ENCODE measurements at regions of chr7 and their contacts with region 1.

Region 1: DNA sequence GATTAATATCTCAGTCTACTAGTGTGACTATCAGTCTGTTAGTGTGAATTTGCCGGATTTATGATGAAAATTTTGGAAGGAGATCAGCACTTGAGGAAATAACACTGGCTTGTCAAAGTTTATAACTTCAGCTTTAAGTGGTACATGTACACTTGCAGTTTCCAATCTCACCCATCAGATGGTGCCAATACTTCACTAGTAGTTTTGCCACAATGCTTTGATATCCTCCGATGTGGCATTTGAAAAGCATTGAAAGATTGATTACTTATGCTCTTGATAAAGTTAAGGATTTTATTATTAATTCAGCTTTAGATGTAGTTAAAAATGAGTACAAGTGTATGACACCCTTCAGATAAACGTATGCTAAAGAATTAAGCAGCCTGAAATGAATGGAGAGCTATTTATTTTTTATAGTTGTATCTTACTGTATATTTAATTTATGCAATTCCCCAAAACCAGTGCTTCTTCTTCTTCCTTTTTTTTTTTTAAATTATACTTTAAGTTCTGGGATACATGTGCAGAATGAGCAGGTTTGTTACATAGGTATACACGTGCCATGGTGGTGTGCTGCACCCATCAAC is 98.2 kb downstream of the ANLN start:
- H3K4me3 ChIP-seq: no peak overlapping the region
- H3K27ac ChIP-seq: no peak overlapping the region
- H3K4me1 ChIP-seq: no peaks in the 10 kb centered on the region
- CTCF ChIP-seq: peak; percentile 32; the same call in 1 of the 2 replicates

Region 2: DNA sequence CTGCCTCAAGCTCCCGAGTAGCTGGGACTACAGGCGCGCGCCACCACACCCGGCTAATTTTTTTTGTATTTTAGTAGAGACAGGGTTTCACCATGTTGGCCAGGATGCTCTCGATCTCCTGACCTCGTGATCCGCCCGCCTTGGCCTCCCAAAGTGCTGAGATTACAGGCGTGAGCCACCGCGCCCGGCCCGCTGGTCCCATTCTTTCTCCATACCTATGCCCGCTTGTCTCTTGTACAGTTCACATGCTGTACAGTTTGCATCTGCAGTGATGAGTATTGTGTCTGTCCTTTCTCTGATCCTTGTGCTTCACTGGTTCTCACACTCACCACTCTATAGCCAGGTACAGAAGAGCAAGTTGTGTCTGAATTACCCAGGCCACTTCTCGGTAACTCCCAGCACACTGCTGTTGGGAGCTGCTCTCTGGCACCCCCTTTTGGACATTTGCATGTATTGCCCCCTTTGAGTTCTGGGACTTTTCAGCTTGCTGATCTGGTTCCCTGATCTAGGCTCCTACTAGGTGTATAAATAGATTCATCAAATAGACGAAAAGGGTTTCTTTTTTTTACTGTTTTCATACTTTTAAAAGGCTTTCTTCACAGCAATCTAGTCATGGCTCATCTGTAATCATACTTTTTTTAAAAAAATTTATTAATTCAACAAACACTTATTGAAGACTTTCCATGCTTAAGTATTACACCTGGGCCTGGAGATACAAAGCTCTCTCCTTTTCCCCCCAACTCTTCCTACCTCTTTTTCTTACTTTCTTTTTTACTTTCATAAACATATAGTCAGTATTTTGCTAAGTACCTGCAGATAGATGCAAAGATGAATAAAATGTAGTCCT is 183.0 kb after region 1 on chr7:
- CTCF ChIA-PET with region 1: interaction called, 111 read pairs
- POLR2A ChIA-PET with region 1: no interaction called
- H3K4me3 ChIP-seq: no peak overlapping the region
- H3K27ac ChIP-seq: no peak overlapping the region
- H3K4me1 ChIP-seq: no peaks in the 10 kb centered on the region
- CTCF ChIP-seq: 0 out of 2 replicates have a peak, but pooled peaks have one; percentile 32

Region 3: DNA sequence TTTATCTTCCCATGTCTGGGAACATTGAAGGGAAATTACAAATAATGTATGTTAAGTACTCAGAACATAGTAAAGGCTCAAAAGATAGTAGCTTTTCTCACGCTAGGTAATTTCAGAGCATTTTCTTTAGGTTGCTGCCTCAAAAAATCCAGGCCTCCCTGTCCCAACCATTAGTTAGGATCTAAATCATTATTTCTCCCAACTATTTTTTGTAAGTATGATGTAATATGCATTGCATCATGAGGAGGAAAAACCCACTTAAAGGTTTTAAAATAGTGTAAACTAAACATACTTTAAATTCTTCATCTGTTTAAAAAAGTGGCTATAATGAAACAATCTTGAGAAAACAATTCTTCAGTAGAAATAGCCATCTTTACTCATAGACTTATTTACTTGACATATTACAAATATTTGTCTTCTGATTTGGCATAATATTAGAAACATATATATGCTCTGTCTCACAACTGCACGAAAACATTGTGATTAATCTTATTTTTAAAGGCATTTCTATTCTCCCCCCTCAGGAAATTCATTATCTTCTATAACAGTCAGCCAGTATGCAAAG is 631.5 kb after region 1 on chr7:
- CTCF ChIA-PET with region 1: interaction called, 10 read pairs
- POLR2A ChIA-PET with region 1: no interaction called
- H3K4me3 ChIP-seq: no peak overlapping the region
- H3K27ac ChIP-seq: no peak overlapping the region
- H3K4me1 ChIP-seq: no peaks in the 10 kb centered on the region
- CTCF ChIP-seq: no peak

Region 4: GRCh38 chr7:37201003-37201875 is 713.4 kb after region 1 on chr7:
- CTCF ChIA-PET with region 1: interaction called, 98 read pairs
- POLR2A ChIA-PET with region 1: no interaction called
- H3K4me3 ChIP-seq: no peak overlapping the region
- H3K27ac ChIP-seq: no peak overlapping the region
- H3K4me1 ChIP-seq: no peaks in the 10 kb centered on the region
- CTCF ChIP-seq: peak; percentile 35; the same call in 1 of the 2 replicates

Measured in HEK293 (cell line).